ENCODE measurements at regions of chr4 and their contacts with region 1.

Region 1: DNA sequence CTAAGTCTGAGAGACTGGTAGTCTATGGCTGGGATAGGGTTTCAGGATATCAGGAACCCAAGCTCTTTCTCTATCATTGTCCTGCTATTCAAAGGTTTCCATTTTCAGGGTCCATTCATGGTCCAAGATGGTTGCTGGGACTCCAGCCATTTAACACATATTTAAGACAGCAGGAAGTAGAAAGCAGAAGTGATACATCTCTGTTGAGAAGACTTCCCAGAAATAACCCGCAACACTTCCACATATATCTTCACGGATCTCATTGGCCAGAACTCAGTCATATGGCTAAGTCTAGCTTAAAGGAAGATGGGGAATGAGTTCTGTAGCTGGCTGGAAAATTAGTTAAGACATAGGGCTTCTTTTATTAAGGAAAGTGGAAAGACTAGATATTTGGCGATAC is 23.8 kb downstream of the CTSO start:
- DNase-seq: no peak
- ATAC-seq: no peak
- H3K4me3 ChIP-seq: no peak overlapping the region
- H3K27ac ChIP-seq: no peak overlapping the region
- H3K4me1 ChIP-seq: no peaks in the 10 kb centered on the region
- H3K27me3 ChIP-seq: no peaks in the 10 kb centered on the region
- CTCF ChIP-seq: no peak
- POLR2A ChIP-seq: no peak
- RAD21 ChIP-seq: no peak

Region 2: DNA sequence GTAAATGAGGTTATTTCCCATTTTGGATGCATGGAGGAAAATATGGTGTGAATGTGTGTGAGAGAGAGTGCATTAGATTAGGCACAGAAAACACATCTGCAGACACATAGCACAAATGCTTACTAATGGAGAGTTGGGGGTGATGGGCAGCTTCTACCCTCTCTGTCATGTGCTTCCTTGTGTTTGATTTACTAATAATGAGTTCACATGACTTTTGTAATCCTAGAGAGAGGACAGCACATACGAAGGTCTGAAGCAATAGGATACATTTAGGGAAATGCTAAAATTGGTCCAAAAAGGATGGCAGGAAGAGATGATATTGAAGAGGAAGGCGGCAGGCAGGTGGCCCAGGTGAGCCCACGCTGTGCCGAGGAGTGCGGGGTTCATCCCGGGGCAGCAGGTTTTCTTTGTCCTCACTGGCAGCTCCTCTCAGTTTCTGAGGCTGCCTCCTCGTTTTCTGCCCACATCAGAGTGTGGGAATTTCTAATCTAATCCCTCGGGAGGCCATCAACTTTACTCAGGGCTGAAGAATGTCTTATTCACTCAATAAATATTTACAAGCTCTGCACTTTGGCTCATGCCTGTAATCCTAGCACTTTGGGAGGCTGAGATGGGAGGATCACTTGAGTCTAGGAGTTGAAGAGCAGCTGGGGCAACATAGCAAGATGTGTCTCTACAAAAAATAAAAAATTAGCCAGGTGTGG is 537.2 kb before region 1 on chr4:
- CTCF ChIA-PET with region 1: no interaction called
- POLR2A ChIA-PET with region 1: interaction called, 13 read pairs
- dilution Hi-C with region 1: no loop called
- in situ Hi-C with region 1: no loop called
- intact Hi-C with region 1: no loop called
- DNase-seq: peak; percentile 84
- ATAC-seq: peak; percentile 87
- H3K4me3 ChIP-seq: no peak overlapping the region
- H3K27ac ChIP-seq: peak overlapping the region; percentile 63
- H3K4me1 ChIP-seq: peaks cover 7% of the 10 kb centered on the region
- H3K27me3 ChIP-seq: no peaks in the 10 kb centered on the region
- CTCF ChIP-seq: no peak
- POLR2A ChIP-seq: no peak
- RAD21 ChIP-seq: no peak

Region 3: DNA sequence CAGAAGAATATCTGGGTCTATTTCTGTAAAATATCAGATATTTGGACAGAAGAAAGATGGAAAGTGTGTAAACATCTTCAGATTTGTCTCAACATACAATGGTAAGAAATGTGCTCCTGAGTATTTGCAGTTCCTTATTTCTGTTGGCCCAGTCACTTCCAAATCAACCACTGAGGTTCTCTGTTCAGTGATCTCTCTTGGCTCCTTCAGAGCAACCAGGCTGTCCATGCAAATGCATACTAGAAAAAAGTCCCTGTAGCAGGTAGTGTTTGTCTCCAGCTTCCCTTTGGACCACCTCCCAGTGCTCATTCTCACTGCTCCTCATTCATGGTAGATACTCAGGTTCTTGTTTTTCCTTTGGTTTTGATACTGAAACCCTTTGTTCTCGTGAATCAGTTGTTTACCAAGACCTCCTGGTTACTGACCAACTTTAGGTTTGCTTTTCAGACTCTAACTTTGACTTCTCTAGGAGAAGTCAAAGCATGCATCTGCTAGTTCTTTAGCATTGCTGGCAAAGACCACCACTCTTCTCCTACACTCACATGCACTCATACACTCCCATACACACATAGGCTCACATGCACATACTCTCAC is 92.5 kb before region 1 on chr4:
- CTCF ChIA-PET with region 1: no interaction called
- POLR2A ChIA-PET with region 1: no interaction called
- dilution Hi-C with region 1: no loop called
- in situ Hi-C with region 1: no loop called
- intact Hi-C with region 1: no loop called
- DNase-seq: no peak
- ATAC-seq: no peak
- H3K4me3 ChIP-seq: no peak overlapping the region
- H3K27ac ChIP-seq: no peak overlapping the region
- H3K4me1 ChIP-seq: peaks cover 2% of the 10 kb centered on the region; the same call in 1 of the 2 replicates
- H3K27me3 ChIP-seq: no peaks in the 10 kb centered on the region
- CTCF ChIP-seq: no peak
- POLR2A ChIP-seq: no peak
- RAD21 ChIP-seq: no peak

Region 4: GRCh38 chr4:156223985-156224384 is 294.2 kb after region 1 on chr4:
- CTCF ChIA-PET with region 1: no interaction called
- POLR2A ChIA-PET with region 1: no interaction called
- dilution Hi-C with region 1: no loop called
- in situ Hi-C with region 1: no loop called
- intact Hi-C with region 1: no loop called
- DNase-seq: no peak
- ATAC-seq: no peak
- H3K4me3 ChIP-seq: no peak overlapping the region
- H3K27ac ChIP-seq: no peak overlapping the region
- H3K4me1 ChIP-seq: no peaks in the 10 kb centered on the region
- H3K27me3 ChIP-seq: peaks cover 2% of the 10 kb centered on the region; the same call in 1 of the 2 replicates
- CTCF ChIP-seq: no peak
- POLR2A ChIP-seq: no peak
- RAD21 ChIP-seq: no peak

Measured in IMR-90 (cell line).